Posterior vena cava (tissue), 2 donors: ENCODE measurements at regions of chr5 and their contacts with region 1.

Region 1: GRCh38 chr5:179274321-179275315 is 70.6 kb downstream of the ADAMTS2 start:
- DNase-seq: peak; percentile 62

Region 2: DNA sequence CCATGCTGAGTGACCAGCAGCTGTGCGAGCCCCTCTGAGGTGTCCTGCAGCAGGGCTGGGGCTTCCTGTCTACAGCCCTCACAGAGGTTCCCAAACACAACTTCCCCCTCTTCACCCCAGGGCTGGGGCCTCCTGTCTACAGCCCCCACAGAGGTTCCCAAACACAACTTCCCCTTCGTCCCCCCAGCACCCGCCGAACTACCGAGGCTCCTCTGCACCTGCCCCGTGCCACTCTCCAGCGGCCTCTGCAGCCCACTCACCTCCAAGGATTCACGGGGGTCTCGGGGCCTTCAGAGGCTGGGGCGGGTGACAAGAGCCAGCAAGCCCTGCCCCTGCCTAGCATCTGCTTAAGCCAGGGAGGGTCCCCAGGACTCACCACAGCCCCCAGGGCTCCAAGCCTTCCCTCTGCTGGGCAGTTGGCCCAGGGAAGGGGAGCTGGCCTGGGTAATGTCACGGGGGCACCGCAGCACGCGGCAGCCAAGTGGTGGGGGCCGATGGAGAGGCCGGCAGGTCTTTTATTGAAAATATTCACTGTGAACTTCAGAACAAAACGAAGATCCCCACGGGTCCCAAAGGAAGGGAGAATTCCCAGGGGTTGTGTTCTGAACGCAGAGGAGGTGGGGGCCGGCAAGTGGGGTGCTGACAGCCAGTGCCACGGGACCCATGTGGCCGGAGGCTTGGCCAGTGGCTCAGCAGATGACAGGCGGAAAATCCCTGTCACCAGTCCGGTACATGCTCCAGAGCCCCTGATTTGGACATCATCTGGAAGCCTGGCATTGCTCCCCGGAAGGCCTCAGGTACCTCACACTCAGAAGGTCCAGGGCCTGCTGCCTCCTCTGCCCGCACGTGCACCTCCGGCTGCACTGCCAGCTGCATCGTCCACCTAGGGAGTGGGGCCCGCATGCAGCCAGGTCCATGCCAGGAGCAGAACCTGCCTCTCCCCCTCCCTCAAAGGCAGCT is 54.7 kb before region 1 on chr5:
- intact Hi-C with region 1: loop called in 1 of 2 experiments (anchors 2 kb)
- DNase-seq: peak; percentile 46